Dendritic cell treated with granulocyte-macrophage colony-stimulating factor and Interleukin-4, amounts not matched to agents 40 ng/mL and 50 ng/mL, for 4 days (primary cell): ENCODE measurements at regions of chr14 and their contacts with region 1.

Region 1: DNA sequence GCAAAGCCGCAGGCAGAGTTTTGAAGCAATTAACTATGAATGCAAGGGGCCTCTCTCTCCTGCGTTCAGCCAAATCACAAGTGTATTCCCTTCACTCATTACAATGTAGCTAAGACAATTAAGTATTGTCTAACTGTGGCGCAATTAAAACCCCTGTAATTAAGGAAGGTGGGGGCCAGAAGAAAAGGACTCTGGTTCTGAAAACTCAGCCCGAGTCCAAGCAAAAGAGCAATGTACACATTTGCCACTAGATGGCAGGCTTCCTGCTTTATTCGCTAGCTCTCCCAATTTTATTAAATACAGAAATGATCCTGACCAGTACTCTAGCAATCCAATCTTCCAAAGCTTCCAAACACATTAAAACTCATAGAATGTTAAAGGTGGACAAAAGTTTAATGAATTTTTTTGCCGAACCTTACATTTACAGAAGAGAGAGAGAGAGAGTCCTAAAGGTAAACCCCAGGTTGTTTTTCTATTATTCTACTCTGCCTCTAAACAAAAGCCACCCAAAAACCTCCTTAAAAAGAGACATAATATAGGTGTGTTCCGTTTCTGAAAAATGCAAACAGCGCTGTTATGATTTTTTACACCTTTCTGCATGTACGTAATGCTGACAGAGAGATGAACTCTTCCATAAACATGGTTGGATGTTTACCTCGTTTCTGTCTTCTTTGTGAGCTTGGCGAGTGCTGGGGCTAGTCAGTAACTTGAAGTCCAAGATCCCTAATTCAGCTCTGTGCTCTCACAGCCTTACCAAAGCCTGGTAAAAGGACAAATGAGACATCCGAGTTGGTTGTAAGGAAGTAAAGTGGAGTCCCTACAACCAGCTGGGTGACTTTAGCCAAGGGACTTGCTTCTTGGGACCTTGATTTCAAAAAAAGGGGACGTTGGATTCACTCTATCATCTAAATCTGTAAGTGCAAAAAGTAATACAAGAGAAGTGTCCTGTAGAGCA is 50.9 kb upstream of the VASH1 start:
- H3K4me3 Mint-ChIP-seq: no peak overlapping the region
- H3K27ac Mint-ChIP-seq: no peak overlapping the region
- H3K4me1 Mint-ChIP-seq: peaks cover 20% of the 10 kb centered on the region
- H3K27me3 Mint-ChIP-seq: peaks cover 4% of the 10 kb centered on the region

Region 2: GRCh38 chr14:76647697-76648298 is 62.5 kb before region 1 on chr14:
- intact Hi-C with region 1: no loop called
- H3K4me3 Mint-ChIP-seq: no peak overlapping the region
- H3K27ac Mint-ChIP-seq: no peak overlapping the region
- H3K4me1 Mint-ChIP-seq: no peaks in the 10 kb centered on the region
- H3K27me3 Mint-ChIP-seq: peaks cover 14% of the 10 kb centered on the region

Region 3: DNA sequence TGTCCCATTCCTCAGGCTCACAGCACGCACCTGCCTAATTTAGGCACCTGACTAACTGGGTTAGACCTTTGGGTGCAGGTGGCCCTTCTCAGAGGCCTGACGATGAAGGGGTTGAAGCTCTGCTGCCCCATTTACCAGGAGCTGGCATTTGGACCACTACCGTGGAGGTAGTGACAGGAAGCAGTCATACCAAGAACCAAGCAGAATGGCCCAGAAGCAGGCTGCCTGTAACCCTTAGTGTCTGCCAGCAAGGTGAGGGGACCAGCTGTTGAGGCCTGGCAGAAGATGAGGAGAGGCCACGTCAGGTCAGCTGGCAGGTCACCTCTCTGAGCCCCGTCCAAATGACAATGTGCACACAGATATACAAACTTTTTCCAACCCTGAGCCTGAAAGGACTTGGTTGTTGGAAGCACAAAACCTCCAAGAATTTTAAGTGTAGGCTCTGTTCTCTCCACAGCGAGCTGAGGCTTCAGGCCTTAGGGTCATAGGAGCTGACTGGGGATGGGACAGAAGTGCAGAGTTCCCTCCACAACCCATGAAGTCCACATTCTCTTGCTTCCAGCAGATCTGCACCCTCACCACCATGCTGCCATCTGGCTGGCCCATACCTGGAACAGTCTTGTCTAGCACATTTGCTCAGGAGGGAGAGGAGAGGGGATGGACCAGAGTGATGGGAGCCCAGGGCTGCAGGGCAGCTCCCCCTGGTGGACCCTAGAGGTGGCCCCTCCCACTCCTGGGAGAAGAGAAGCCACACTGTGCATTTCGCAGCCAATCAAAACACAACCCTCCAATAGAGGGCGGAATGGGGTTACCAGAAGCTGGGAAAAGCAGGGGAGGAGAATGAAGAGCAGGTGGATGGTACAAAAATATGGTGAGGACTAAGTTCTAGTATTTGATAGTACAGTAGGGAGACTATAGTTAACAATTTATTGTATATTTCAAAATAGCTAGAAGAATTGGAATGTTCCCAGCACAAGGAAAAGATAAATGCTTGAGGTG is 74.2 kb after region 1 on chr14:
- intact Hi-C with region 1: loop called (anchors 1 kb)
- H3K4me3 Mint-ChIP-seq: no peak overlapping the region
- H3K27ac Mint-ChIP-seq: no peak overlapping the region
- H3K4me1 Mint-ChIP-seq: peaks cover 56% of the 10 kb centered on the region
- H3K27me3 Mint-ChIP-seq: no peaks in the 10 kb centered on the region

Region 4: DNA sequence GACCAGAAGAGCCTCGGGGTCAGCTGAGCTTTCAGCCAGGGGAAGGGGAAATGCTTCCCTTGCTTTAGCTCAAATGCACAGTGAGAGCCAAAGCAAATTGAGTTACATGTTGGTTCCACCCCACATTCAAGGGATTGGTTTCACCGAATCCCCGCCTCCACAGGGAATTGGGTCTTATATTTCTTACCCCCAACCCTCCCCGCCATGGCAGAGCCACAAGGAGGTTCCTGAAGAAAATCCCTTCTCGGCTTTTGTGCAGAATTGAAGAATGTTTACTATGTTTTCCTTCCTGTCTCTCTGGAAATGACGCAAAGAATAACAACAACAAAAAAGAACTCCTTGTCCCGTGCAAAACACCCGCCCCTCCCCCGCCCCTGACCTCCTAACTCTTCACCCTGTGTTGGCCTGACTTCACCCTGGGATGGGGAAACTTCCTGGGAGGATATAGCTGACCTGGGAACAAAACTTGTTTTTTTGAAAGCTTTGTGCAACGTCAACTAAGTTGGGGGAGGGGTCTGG is 365.8 kb after region 1 on chr14:
- intact Hi-C with region 1: loop called (anchors 10 kb)
- H3K4me3 Mint-ChIP-seq: no peak overlapping the region
- H3K27ac Mint-ChIP-seq: peak overlapping the region; percentile 65
- H3K4me1 Mint-ChIP-seq: peaks cover 15% of the 10 kb centered on the region
- H3K27me3 Mint-ChIP-seq: no peaks in the 10 kb centered on the region